Activated CD4-positive, alpha-beta memory T cell treated with anti-CD3 and anti-CD28 coated beads, Interleukin-2, amount 10 ng/mL, durations not matched to agents 7 days and 5 days (primary cell): ENCODE measurements at regions of chr1 and their contacts with region 1.

Region 1: GRCh38 chr1:183915625-183916510 is 110.9 kb downstream of the RGL1 start:
- DNase-seq: peak; percentile 81
- H3K4me3 Mint-ChIP-seq: no peak overlapping the region
- H3K27ac Mint-ChIP-seq: peak overlapping the region; percentile 27
- H3K4me1 Mint-ChIP-seq: peaks cover 40% of the 10 kb centered on the region
- H3K27me3 Mint-ChIP-seq: no peaks in the 10 kb centered on the region

Region 2: GRCh38 chr1:183480971-183481441 is 434.9 kb before region 1 on chr1:
- CTCF ChIA-PET with region 1: no interaction called
- POLR2A ChIA-PET with region 1: no interaction called
- DNase-seq: no peak
- H3K4me3 Mint-ChIP-seq: no peak overlapping the region
- H3K27ac Mint-ChIP-seq: peak overlapping the region; percentile 46
- H3K4me1 Mint-ChIP-seq: peaks cover 52% of the 10 kb centered on the region
- H3K27me3 Mint-ChIP-seq: no peaks in the 10 kb centered on the region

Region 3: GRCh38 chr1:183655562-183656075 is 260.2 kb before region 1 on chr1:
- CTCF ChIA-PET with region 1: interaction called, 122 read pairs
- POLR2A ChIA-PET with region 1: interaction called, 17 read pairs
- DNase-seq: peak; percentile 70
- H3K4me3 Mint-ChIP-seq: no peak overlapping the region
- H3K27ac Mint-ChIP-seq: no peak overlapping the region
- H3K4me1 Mint-ChIP-seq: peaks cover 35% of the 10 kb centered on the region
- H3K27me3 Mint-ChIP-seq: peaks cover 5% of the 10 kb centered on the region

Region 4: GRCh38 chr1:183685112-183685713 is 230.7 kb before region 1 on chr1:
- CTCF ChIA-PET with region 1: interaction called, 40 read pairs
- POLR2A ChIA-PET with region 1: interaction called, 4 read pairs
- DNase-seq: no peak
- H3K4me3 Mint-ChIP-seq: no peak overlapping the region
- H3K27ac Mint-ChIP-seq: no peak overlapping the region
- H3K4me1 Mint-ChIP-seq: no peaks in the 10 kb centered on the region
- H3K27me3 Mint-ChIP-seq: peaks cover 22% of the 10 kb centered on the region

Region 5: DNA sequence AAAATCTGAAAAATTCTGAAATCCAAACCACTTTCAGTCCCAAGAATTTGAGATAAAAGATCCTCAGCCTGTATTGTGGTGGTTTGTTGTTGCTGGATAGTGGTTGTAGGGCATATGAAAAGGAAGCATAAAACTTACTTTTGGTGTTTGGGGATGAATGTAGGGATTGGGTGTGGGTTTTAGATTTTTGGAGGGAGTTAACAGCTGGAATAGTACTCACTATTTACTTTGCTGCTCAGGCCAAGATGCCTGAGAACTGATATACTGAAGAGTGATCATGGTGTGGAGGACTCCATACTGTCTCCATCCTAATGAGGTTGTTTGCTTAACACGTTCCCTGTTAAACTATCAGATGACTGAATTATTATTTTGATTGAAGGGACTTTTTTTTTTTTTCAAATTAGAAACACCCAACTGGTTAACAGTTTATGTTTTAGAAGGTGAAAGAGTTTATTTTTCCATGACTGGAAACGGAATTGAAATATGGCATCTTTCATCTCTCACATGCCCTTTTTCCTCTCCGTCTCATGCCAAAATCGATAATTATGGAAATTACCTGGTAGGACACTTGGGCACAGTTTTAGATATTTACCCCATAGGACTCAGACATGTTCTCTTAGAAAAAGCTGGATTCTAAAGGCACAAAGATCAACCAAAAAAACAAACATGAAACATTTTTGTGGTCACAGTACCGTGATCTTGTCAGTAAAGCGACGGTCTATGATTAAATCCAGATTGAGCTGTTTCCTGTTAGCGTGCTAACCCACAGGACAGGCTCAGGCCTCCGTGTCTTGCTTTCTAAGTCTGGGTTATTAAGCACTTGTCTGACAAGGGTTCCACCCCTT is 73.7 kb before region 1 on chr1:
- CTCF ChIA-PET with region 1: interaction called, 7 read pairs
- POLR2A ChIA-PET with region 1: interaction called, 12 read pairs
- DNase-seq: peak; percentile 50
- H3K4me3 Mint-ChIP-seq: peak overlapping the region; percentile 60
- H3K27ac Mint-ChIP-seq: peak overlapping the region; percentile 89
- H3K4me1 Mint-ChIP-seq: peaks cover 38% of the 10 kb centered on the region
- H3K27me3 Mint-ChIP-seq: no peaks in the 10 kb centered on the region

Region 6: GRCh38 chr1:183956559-183957188 is 40.8 kb after region 1 on chr1:
- CTCF ChIA-PET with region 1: interaction called, 10 read pairs
- POLR2A ChIA-PET with region 1: interaction called, 20 read pairs
- DNase-seq: peak; percentile 74
- H3K4me3 Mint-ChIP-seq: peak overlapping the region; percentile 8
- H3K27ac Mint-ChIP-seq: no peak overlapping the region
- H3K4me1 Mint-ChIP-seq: peaks cover 9% of the 10 kb centered on the region
- H3K27me3 Mint-ChIP-seq: no peaks in the 10 kb centered on the region